ENCODE measurements at regions of chr10 and their contacts with region 1.

Region 1: GRCh38 chr10:119686439-119687191 is 35.4 kb downstream of the BAG3 start:
- DNase-seq: no peak
- ATAC-seq: peak; percentile 87
- H3K4me3 ChIP-seq: no peak overlapping the region
- H3K27ac ChIP-seq: no peak overlapping the region
- H3K4me1 ChIP-seq: no peaks in the 10 kb centered on the region
- H3K27me3 ChIP-seq: no peaks in the 10 kb centered on the region
- CTCF ChIP-seq: peak; percentile 84 to 92 (median 86)
- EP300 ChIP-seq: no peak
- POLR2A ChIP-seq: no peak
- RAD21 ChIP-seq: peak; percentile 96

Region 2: GRCh38 chr10:119725828-119726675 is 39.4 kb after region 1 on chr10 and contains the start of gene INPP5F:
- CTCF ChIA-PET with region 1: interaction called, 68 read pairs
- POLR2A ChIA-PET with region 1: interaction called, 19 read pairs
- RAD21 ChIA-PET with region 1: interaction called, 82 read pairs
- SMC1A ChIA-PET with region 1: interaction called, 36 read pairs
- in situ Hi-C with region 1: no loop called
- intact Hi-C with region 1: no loop called
- DNase-seq: peak; percentile 88
- ATAC-seq: peak; percentile 88
- H3K4me3 ChIP-seq: peak within 1 kb of the TSS; percentile 95
- H3K27ac ChIP-seq: peak within 1 kb of the TSS; percentile 82
- H3K4me1 ChIP-seq: peaks cover 17% of the 10 kb centered on the region
- H3K27me3 ChIP-seq: no peaks in the 10 kb centered on the region
- CTCF ChIP-seq: peak in 2 of 3 experiments; percentile 17 to 38; a peak in 3 of 6 replicates
- EP300 ChIP-seq: no peak
- POLR2A ChIP-seq: peak; percentile 59; the same call in 1 of the 2 replicates
- RAD21 ChIP-seq: no peak
- polyA plus RNA-seq, gene INPP5F: 6.0 to 13.4 TPM

Region 3: GRCh38 chr10:119761106-119761505 is 74.5 kb after region 1 on chr10:
- CTCF ChIA-PET with region 1: interaction called, 225 read pairs
- POLR2A ChIA-PET with region 1: no interaction called
- RAD21 ChIA-PET with region 1: no interaction called
- SMC1A ChIA-PET with region 1: interaction called, 172 read pairs
- in situ Hi-C with region 1: no loop called
- intact Hi-C with region 1: no loop called
- DNase-seq: no peak
- ATAC-seq: no peak
- H3K4me3 ChIP-seq: no peak overlapping the region
- H3K27ac ChIP-seq: no peak overlapping the region
- H3K4me1 ChIP-seq: no peaks in the 10 kb centered on the region
- H3K27me3 ChIP-seq: no peaks in the 10 kb centered on the region
- CTCF ChIP-seq: no peak
- EP300 ChIP-seq: no peak
- POLR2A ChIP-seq: no peak
- RAD21 ChIP-seq: no peak

Region 4: DNA sequence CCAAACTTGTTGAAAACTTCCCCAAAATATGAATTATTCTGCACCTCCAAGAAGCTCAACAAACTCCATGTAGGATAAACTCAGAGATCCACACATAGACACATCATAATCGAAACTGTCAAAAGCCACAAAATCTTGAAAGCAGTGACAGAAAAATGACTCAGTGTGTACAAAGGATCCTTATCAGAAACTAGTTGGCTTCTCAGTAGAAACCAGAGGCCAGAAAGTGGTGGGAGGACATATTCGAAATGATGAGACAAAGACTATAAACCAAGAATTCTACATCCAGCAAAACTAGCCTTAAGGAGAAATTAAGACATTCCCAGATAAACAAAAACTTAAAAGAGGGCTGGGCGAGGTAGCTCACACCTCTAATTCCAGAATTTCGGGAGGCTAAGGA is 147.6 kb after region 1 on chr10:
- CTCF ChIA-PET with region 1: interaction called, 37 read pairs
- POLR2A ChIA-PET with region 1: interaction called, 3 read pairs
- RAD21 ChIA-PET with region 1: interaction called, 5 read pairs
- SMC1A ChIA-PET with region 1: interaction called, 12 read pairs
- in situ Hi-C with region 1: no loop called
- intact Hi-C with region 1: no loop called
- DNase-seq: no peak
- ATAC-seq: peak; percentile 67
- H3K4me3 ChIP-seq: no peak overlapping the region
- H3K27ac ChIP-seq: no peak overlapping the region
- H3K4me1 ChIP-seq: no peaks in the 10 kb centered on the region
- H3K27me3 ChIP-seq: no peaks in the 10 kb centered on the region
- CTCF ChIP-seq: no peak
- EP300 ChIP-seq: no peak
- POLR2A ChIP-seq: no peak
- RAD21 ChIP-seq: no peak

Region 5: GRCh38 chr10:119872860-119873681 is 186.5 kb after region 1 on chr10:
- CTCF ChIA-PET with region 1: interaction called, 36 read pairs
- POLR2A ChIA-PET with region 1: interaction called, 4 read pairs
- RAD21 ChIA-PET with region 1: interaction called, 16 read pairs
- SMC1A ChIA-PET with region 1: interaction called, 10 read pairs
- in situ Hi-C with region 1: no loop called
- intact Hi-C with region 1: no loop called
- DNase-seq: peak; percentile 49
- ATAC-seq: peak; percentile 93
- H3K4me3 ChIP-seq: peak overlapping the region; percentile 85
- H3K27ac ChIP-seq: peak overlapping the region; percentile 83
- H3K4me1 ChIP-seq: peaks cover 9% of the 10 kb centered on the region
- H3K27me3 ChIP-seq: no peaks in the 10 kb centered on the region
- CTCF ChIP-seq: 0 out of 6 replicates have a peak, but pooled peaks of 1 of the 3 experiments have one; percentile 4
- EP300 ChIP-seq: no peak
- POLR2A ChIP-seq: peak; percentile 70
- RAD21 ChIP-seq: no peak

Measured in GM12878 (cell line).